Activated CD4-positive, alpha-beta memory T cell treated with anti-CD3 and anti-CD28 coated beads, Interleukin-2, amount 10 ng/mL, durations not matched to agents 7 days and 5 days (primary cell): ENCODE measurements at regions of chr1 and their contacts with region 1.

Region 1: GRCh38 chr1:150486964-150487762 is at the start of gene TARS2:
- DNase-seq: peak; percentile 96
- H3K4me3 Mint-ChIP-seq: peak within 1 kb of the TSS; percentile 83
- H3K27ac Mint-ChIP-seq: peak within 1 kb of the TSS; percentile 85
- H3K4me1 Mint-ChIP-seq: peaks cover 25% of the 10 kb centered on the region
- H3K27me3 Mint-ChIP-seq: no peaks in the 10 kb centered on the region
- total RNA-seq, gene TARS2: 37.2 to 38.8 TPM

Region 2: GRCh38 chr1:150441121-150441520 is 46.0 kb before region 1 on chr1:
- CTCF ChIA-PET with region 1: no interaction called
- POLR2A ChIA-PET with region 1: no interaction called
- DNase-seq: no peak
- H3K4me3 Mint-ChIP-seq: no peak overlapping the region
- H3K27ac Mint-ChIP-seq: no peak overlapping the region
- H3K4me1 Mint-ChIP-seq: peaks cover 11% of the 10 kb centered on the region
- H3K27me3 Mint-ChIP-seq: no peaks in the 10 kb centered on the region

Region 3: DNA sequence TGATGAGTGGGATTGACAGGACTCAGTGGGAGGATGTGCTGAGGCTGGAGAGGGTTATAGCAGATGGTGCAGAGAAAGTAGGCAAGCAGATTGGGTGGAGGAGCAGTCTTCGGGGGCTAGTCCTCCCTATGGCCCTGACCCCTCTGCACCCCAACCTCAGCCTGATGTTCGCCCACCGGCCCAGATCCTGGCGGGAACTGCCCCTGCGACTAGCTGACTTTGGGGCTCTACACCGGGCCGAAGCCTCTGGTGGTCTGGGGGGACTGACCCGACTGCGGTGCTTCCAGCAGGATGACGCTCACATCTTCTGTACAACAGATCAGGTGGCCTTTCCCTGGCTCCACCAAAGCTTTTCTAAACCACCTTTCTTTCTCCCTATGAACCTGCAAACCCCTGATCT is 11.2 kb after region 1 on chr1:
- CTCF ChIA-PET with region 1: interaction called, 3 read pairs
- POLR2A ChIA-PET with region 1: interaction called, 10 read pairs
- DNase-seq: no peak
- H3K4me3 Mint-ChIP-seq: no peak overlapping the region
- H3K27ac Mint-ChIP-seq: no peak overlapping the region
- H3K4me1 Mint-ChIP-seq: no peaks in the 10 kb centered on the region
- H3K27me3 Mint-ChIP-seq: no peaks in the 10 kb centered on the region

Region 4: GRCh38 chr1:150515328-150516048 is 28.3 kb after region 1 on chr1 and contains the start of gene FALEC:
- CTCF ChIA-PET with region 1: interaction called, 10 read pairs
- POLR2A ChIA-PET with region 1: interaction called, 45 read pairs
- DNase-seq: peak; percentile 93
- H3K4me3 Mint-ChIP-seq: peak within 1 kb of the TSS; percentile 75
- H3K27ac Mint-ChIP-seq: peak within 1 kb of the TSS; percentile 56
- H3K4me1 Mint-ChIP-seq: peaks cover 26% of the 10 kb centered on the region
- H3K27me3 Mint-ChIP-seq: peaks cover 2% of the 10 kb centered on the region
- total RNA-seq, gene FALEC: not detected

Region 5: DNA sequence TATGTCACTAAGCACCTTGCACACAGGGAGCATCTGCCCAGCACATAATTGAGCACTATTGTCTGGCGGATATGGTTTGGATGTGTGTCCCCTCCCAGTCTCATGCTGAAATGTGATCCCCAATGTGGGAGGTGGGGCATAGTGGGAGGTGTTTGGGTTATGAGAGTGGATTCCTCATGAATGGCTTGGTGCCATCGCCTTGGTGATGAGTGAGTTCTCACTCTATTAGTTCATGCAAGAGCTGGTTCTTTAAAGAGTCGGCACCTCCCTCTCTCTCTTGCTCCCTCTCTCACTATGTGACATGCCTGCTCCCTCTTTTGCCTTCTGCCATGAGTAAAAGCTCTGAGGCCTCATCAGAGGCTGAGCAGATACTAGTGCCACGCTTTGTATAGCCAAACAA is 311.4 kb after region 1 on chr1:
- CTCF ChIA-PET with region 1: no interaction called
- POLR2A ChIA-PET with region 1: no interaction called
- DNase-seq: no peak
- H3K4me3 Mint-ChIP-seq: no peak overlapping the region
- H3K27ac Mint-ChIP-seq: no peak overlapping the region
- H3K4me1 Mint-ChIP-seq: no peaks in the 10 kb centered on the region
- H3K27me3 Mint-ChIP-seq: no peaks in the 10 kb centered on the region